ENCODE measurements at regions of chr7 and their contacts with region 1.

Region 1: GRCh38 chr7:55365675-55366460 is 731 bp downstream of the LANCL2 start:
- DNase-seq: peak; percentile 95 to 100 (median 98)
- H3K4me3 ChIP-seq: peak overlapping the region; percentile 98 to 99
- H3K4me3 Mint-ChIP-seq: peak overlapping the region; percentile 90 to 96 (median 94)
- H3K27ac ChIP-seq: peak overlapping the region; percentile 98
- H3K27ac Mint-ChIP-seq: peak overlapping the region; percentile 98 to 99 (median 99)
- H3K4me1 ChIP-seq: peaks cover 27% of the 10 kb centered on the region
- H3K4me1 Mint-ChIP-seq: peaks cover 13 to 25% (median 21%) of the 10 kb centered on the region in 4 donors
- H3K27me3 ChIP-seq: no peaks in the 10 kb centered on the region
- H3K27me3 Mint-ChIP-seq: no peaks in the 10 kb centered on the region

Region 2: DNA sequence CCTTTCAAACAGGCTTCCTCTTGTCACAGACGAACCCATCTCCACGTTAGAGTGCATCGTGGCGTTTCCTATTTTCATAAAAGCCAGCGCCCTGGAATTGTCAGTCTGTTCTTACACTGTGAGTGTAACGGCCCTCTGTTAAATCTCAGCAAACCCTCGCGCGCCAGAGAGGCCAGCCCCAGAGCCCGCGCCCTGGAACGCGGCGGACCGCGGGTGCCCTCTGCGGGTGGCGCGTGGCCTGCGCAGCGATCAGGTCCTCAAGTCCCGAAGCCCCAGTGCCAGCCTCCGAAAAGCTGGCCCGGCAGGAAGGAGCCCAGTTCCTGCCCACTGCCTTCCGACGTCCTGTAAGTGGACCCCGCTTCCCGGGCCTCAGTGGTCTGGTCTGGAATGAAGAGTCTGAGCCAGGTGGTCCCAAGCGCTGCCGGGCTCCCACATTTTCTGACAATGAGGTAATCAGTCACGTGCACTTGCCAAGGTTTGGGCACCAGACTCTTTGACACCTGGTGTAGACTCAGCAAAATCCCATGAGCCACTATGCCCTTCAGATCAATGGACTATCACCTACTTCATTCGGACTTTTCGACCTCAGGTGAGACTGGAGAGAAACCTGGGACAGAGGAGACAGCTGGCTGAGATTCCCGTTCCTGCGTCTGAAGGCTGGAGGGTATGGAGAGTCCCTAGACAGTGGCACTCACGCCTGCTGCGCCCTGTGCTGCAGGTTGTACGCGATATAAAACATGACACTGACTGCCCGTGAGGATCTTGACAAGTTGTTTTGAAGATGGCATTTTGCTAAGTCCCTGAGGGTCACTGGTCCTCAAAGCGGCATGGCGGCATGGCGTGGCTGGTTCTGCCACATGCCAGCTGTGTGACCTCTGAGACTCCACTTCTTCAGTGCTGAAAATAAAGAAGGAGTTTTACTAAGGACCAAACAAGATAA is 110.1 kb before region 1 on chr7:
- CTCF ChIA-PET with region 1: interaction called, 6 read pairs
- POLR2A ChIA-PET with region 1: interaction called, 3 read pairs
- intact Hi-C with region 1: loop called (anchors 2 kb)
- DNase-seq: peak; percentile 54 to 67 (median 65)
- H3K4me3 ChIP-seq: peak overlapping the region; percentile 66 to 73
- H3K4me3 Mint-ChIP-seq: peak overlapping the region; percentile 81 to 94 (median 90)
- H3K27ac ChIP-seq: no peak overlapping the region
- H3K27ac Mint-ChIP-seq: peak overlapping the region in 5 of 7 donors; percentile 21 to 77 (median 63)
- H3K4me1 ChIP-seq: peaks cover 14% of the 10 kb centered on the region
- H3K4me1 Mint-ChIP-seq: peaks cover 5 to 18% (median 13%) of the 10 kb centered on the region in 4 donors
- H3K27me3 ChIP-seq: peaks cover 8% of the 10 kb centered on the region
- H3K27me3 Mint-ChIP-seq: peaks cover 26 to 50% of the 10 kb centered on the region in 2 donors

Region 3: GRCh38 chr7:55415173-55415778 is 49.4 kb after region 1 on chr7:
- CTCF ChIA-PET with region 1: interaction called, 5 read pairs
- POLR2A ChIA-PET with region 1: interaction called, 3 read pairs
- intact Hi-C with region 1: loop called (anchors 5 kb)
- DNase-seq: peak; percentile 73 to 78 (median 76)
- H3K4me3 ChIP-seq: no peak overlapping the region
- H3K4me3 Mint-ChIP-seq: no peak overlapping the region
- H3K27ac ChIP-seq: no peak overlapping the region
- H3K27ac Mint-ChIP-seq: peak overlapping the region in 5 of 7 donors; percentile 4 to 59 (median 42)
- H3K4me1 ChIP-seq: no peaks in the 10 kb centered on the region
- H3K4me1 Mint-ChIP-seq: peaks cover 2 to 4% (median 3%) of the 10 kb centered on the region in 4 donors
- H3K27me3 ChIP-seq: no peaks in the 10 kb centered on the region
- H3K27me3 Mint-ChIP-seq: no peaks in the 10 kb centered on the region

Region 4: GRCh38 chr7:55572378-55573233 is 206.7 kb after region 1 on chr7 and contains the start of gene VOPP1:
- CTCF ChIA-PET with region 1: no interaction called
- POLR2A ChIA-PET with region 1: interaction called, 36 read pairs
- intact Hi-C with region 1: loop called (anchors 1 kb)
- DNase-seq: peak in 4 of 5 donors; percentile 62 to 78 (median 69)
- H3K4me3 ChIP-seq: peak within 1 kb of the TSS; percentile 63 to 80
- H3K4me3 Mint-ChIP-seq: peak within 1 kb of the TSS; percentile 93 to 98 (median 96)
- H3K27ac ChIP-seq: peak within 1 kb of the TSS; percentile 82
- H3K27ac Mint-ChIP-seq: peak within 1 kb of the TSS; percentile 93 to 99 (median 97)
- H3K4me1 ChIP-seq: peaks cover 55% of the 10 kb centered on the region
- H3K4me1 Mint-ChIP-seq: peaks cover 44 to 72% (median 56%) of the 10 kb centered on the region in 4 donors
- H3K27me3 ChIP-seq: no peaks in the 10 kb centered on the region
- H3K27me3 Mint-ChIP-seq: no peaks in the 10 kb centered on the region
- total RNA-seq, gene VOPP1: 91.0 to 98.7 TPM

Region 5: GRCh38 chr7:56051339-56052191 is 685.7 kb after region 1 on chr7 and contains the starts of genes CCT6A and PSPH:
- CTCF ChIA-PET with region 1: no interaction called
- POLR2A ChIA-PET with region 1: interaction called, 9 read pairs
- intact Hi-C with region 1: loop called (anchors 1 kb)
- DNase-seq: peak; percentile 82 to 89 (median 85)
- H3K4me3 ChIP-seq: peak within 1 kb of the TSS; percentile 10 to 95
- H3K4me3 Mint-ChIP-seq: peak within 1 kb of the TSS; percentile 90 to 99 (median 96)
- H3K27ac ChIP-seq: peak within 1 kb of the TSS; percentile 82
- H3K27ac Mint-ChIP-seq: peak within 1 kb of the TSS; percentile 87 to 98 (median 96)
- H3K4me1 ChIP-seq: peaks cover 41% of the 10 kb centered on the region
- H3K4me1 Mint-ChIP-seq: peaks cover 18 to 44% (median 28%) of the 10 kb centered on the region in 4 donors
- H3K27me3 ChIP-seq: no peaks in the 10 kb centered on the region
- H3K27me3 Mint-ChIP-seq: no peaks in the 10 kb centered on the region
- total RNA-seq, gene CCT6A: 72.9 to 78.2 TPM
- total RNA-seq, gene PSPH: 4.3 to 8.0 TPM

Measured in CD4-positive, alpha-beta memory T cell (primary cell).